CD4-positive, alpha-beta memory T cell (primary cell): ENCODE measurements at regions of chr18 and their contacts with region 1.

Region 1: DNA sequence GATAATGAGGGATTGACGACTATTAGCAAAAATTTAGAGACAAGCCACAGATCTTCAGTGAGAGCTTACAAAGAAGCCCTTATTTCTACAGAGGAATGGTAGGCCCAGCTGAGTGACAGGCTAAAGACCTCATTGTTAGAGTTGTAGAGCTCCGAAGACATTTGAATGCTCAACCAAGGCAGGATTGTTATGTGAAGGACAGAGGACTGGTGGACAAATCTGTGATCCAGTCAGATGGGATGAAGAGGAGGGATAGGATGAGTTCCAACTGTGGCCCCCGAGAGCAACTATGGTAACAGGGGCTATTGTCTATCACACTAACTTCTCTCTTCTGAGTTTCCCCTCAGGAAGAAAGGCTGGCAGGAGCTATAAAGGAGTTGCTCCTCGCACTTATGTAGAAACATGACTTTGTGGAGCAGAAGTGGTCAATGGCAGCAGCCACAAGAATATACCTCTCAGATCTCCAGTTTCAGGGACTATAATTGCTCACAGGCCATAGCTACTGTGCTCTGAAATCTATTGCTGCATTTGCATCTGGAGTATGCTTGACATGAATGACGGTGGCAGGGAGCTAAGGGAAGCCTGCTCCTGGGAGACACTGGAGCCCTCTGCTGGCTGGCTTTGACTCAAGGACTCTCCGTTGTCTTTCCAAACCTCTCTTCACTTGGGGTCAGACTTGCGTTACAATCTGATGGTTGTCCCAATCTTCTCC is 50.3 kb upstream of the GREB1L start:
- DNase-seq: no peak
- H3K4me3 ChIP-seq: no peak overlapping the region
- H3K4me3 Mint-ChIP-seq: no peak overlapping the region
- H3K27ac ChIP-seq: no peak overlapping the region
- H3K27ac Mint-ChIP-seq: no peak overlapping the region
- H3K4me1 ChIP-seq: no peaks in the 10 kb centered on the region
- H3K4me1 Mint-ChIP-seq: no peaks in the 10 kb centered on the region
- H3K27me3 ChIP-seq: no peaks in the 10 kb centered on the region
- H3K27me3 Mint-ChIP-seq: peaks cover 7 to 9% of the 10 kb centered on the region in 2 donors

Region 2: GRCh38 chr18:21141668-21142422 is 49.9 kb before region 1 on chr18:
- CTCF ChIA-PET with region 1: no interaction called
- POLR2A ChIA-PET with region 1: no interaction called
- intact Hi-C with region 1: no loop called
- DNase-seq: no peak
- H3K4me3 ChIP-seq: no peak overlapping the region
- H3K4me3 Mint-ChIP-seq: no peak overlapping the region
- H3K27ac ChIP-seq: no peak overlapping the region
- H3K27ac Mint-ChIP-seq: no peak overlapping the region
- H3K4me1 ChIP-seq: no peaks in the 10 kb centered on the region
- H3K4me1 Mint-ChIP-seq: no peaks in the 10 kb centered on the region
- H3K27me3 ChIP-seq: no peaks in the 10 kb centered on the region
- H3K27me3 Mint-ChIP-seq: no peaks in the 10 kb centered on the region

Region 3: DNA sequence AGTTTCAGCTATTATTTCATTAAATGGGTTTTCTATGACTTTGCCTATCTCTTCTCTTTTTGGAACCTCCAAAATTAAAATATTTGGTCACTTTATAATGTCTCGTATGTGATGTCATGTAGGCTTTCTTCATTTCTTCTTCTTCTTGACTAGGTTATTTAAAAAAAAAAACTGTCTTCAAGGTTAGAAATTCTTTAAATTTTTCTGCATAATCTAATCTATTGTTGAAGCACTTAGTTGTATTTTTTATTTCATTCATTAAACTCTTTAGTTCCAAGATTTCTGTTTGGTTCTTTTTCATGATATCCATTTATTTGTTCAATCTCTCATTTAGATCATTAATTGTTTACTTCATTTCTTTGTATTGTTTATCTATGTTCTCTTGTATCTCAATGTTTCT is 36.3 kb before region 1 on chr18:
- CTCF ChIA-PET with region 1: no interaction called
- POLR2A ChIA-PET with region 1: no interaction called
- intact Hi-C with region 1: no loop called
- DNase-seq: no peak
- H3K4me3 ChIP-seq: no peak overlapping the region
- H3K4me3 Mint-ChIP-seq: no peak overlapping the region
- H3K27ac ChIP-seq: no peak overlapping the region
- H3K27ac Mint-ChIP-seq: no peak overlapping the region
- H3K4me1 ChIP-seq: no peaks in the 10 kb centered on the region
- H3K4me1 Mint-ChIP-seq: no peaks in the 10 kb centered on the region
- H3K27me3 ChIP-seq: no peaks in the 10 kb centered on the region
- H3K27me3 Mint-ChIP-seq: peaks cover 5% of the 10 kb centered on the region in 2 donors

Region 4: GRCh38 chr18:21179590-21180220 is 12.0 kb before region 1 on chr18:
- CTCF ChIA-PET with region 1: interaction called, 25 read pairs
- POLR2A ChIA-PET with region 1: no interaction called
- intact Hi-C with region 1: no loop called
- DNase-seq: peak in 4 of 5 donors; percentile 22 to 37 (median 28)
- H3K4me3 ChIP-seq: no peak overlapping the region
- H3K4me3 Mint-ChIP-seq: no peak overlapping the region
- H3K27ac ChIP-seq: no peak overlapping the region
- H3K27ac Mint-ChIP-seq: no peak overlapping the region
- H3K4me1 ChIP-seq: no peaks in the 10 kb centered on the region
- H3K4me1 Mint-ChIP-seq: peaks cover 0 to 19% (median 5%) of the 10 kb centered on the region in 4 donors
- H3K27me3 ChIP-seq: no peaks in the 10 kb centered on the region
- H3K27me3 Mint-ChIP-seq: no peaks in the 10 kb centered on the region

Region 5: GRCh38 chr18:21444465-21445023 is 252.8 kb after region 1 on chr18:
- CTCF ChIA-PET with region 1: interaction called, 3 read pairs
- POLR2A ChIA-PET with region 1: no interaction called
- intact Hi-C with region 1: loop called (anchors 5 kb)
- DNase-seq: no peak
- H3K4me3 ChIP-seq: no peak overlapping the region
- H3K4me3 Mint-ChIP-seq: no peak overlapping the region
- H3K27ac ChIP-seq: no peak overlapping the region
- H3K27ac Mint-ChIP-seq: peak overlapping the region in 1 of 7 donors; percentile 11
- H3K4me1 ChIP-seq: no peaks in the 10 kb centered on the region
- H3K4me1 Mint-ChIP-seq: no peaks in the 10 kb centered on the region
- H3K27me3 ChIP-seq: no peaks in the 10 kb centered on the region
- H3K27me3 Mint-ChIP-seq: peaks cover 8 to 13% of the 10 kb centered on the region in 2 donors

Region 6: DNA sequence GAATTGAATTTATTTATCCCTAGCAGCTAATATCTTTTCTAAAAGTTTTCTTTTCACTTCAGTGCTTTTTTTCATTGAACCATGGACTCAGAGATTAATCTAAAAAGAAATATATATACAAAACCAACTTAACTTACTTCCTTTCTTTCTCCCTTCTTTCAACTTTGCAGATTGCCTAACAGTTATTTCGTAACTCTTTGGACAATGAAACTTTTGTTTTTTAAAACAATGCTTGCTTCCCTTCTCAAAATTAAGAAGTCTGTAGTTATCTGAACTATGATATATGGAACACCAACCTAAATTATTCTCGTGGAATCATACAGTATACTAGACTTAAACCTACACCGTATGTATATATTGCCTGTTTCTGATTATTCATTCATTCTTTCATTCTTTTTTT is 611.7 kb after region 1 on chr18:
- CTCF ChIA-PET with region 1: no interaction called
- POLR2A ChIA-PET with region 1: no interaction called
- intact Hi-C with region 1: no loop called
- DNase-seq: no peak
- H3K4me3 ChIP-seq: no peak overlapping the region
- H3K4me3 Mint-ChIP-seq: no peak overlapping the region
- H3K27ac ChIP-seq: no peak overlapping the region
- H3K27ac Mint-ChIP-seq: no peak overlapping the region
- H3K4me1 ChIP-seq: no peaks in the 10 kb centered on the region
- H3K4me1 Mint-ChIP-seq: peaks cover 0 to 6% (median 1%) of the 10 kb centered on the region in 4 donors
- H3K27me3 ChIP-seq: no peaks in the 10 kb centered on the region
- H3K27me3 Mint-ChIP-seq: no peaks in the 10 kb centered on the region

Region 7: GRCh38 chr18:21851327-21851972 is 659.7 kb after region 1 on chr18:
- CTCF ChIA-PET with region 1: interaction called, 3 read pairs
- POLR2A ChIA-PET with region 1: no interaction called
- intact Hi-C with region 1: loop called (anchors 2 kb)
- DNase-seq: peak in 1 of 5 donors; percentile 4
- H3K4me3 ChIP-seq: no peak overlapping the region
- H3K4me3 Mint-ChIP-seq: no peak overlapping the region
- H3K27ac ChIP-seq: no peak overlapping the region
- H3K27ac Mint-ChIP-seq: peak overlapping the region in 1 of 7 donors; percentile 35
- H3K4me1 ChIP-seq: no peaks in the 10 kb centered on the region
- H3K4me1 Mint-ChIP-seq: peaks cover 0 to 6% (median 5%) of the 10 kb centered on the region in 4 donors
- H3K27me3 ChIP-seq: no peaks in the 10 kb centered on the region
- H3K27me3 Mint-ChIP-seq: no peaks in the 10 kb centered on the region

Region 8: GRCh38 chr18:21955757-21956652 is 764.3 kb after region 1 on chr18:
- CTCF ChIA-PET with region 1: interaction called, 67 read pairs
- POLR2A ChIA-PET with region 1: no interaction called
- intact Hi-C with region 1: no loop called
- DNase-seq: peak; percentile 61 to 67 (median 65)
- H3K4me3 ChIP-seq: no peak overlapping the region
- H3K4me3 Mint-ChIP-seq: no peak overlapping the region
- H3K27ac ChIP-seq: no peak overlapping the region
- H3K27ac Mint-ChIP-seq: no peak overlapping the region
- H3K4me1 ChIP-seq: no peaks in the 10 kb centered on the region
- H3K4me1 Mint-ChIP-seq: no peaks in the 10 kb centered on the region
- H3K27me3 ChIP-seq: no peaks in the 10 kb centered on the region
- H3K27me3 Mint-ChIP-seq: peaks cover 12 to 26% of the 10 kb centered on the region in 2 donors